ENCODE measurements at regions of chr2 and their contacts with region 1.

Region 1: DNA sequence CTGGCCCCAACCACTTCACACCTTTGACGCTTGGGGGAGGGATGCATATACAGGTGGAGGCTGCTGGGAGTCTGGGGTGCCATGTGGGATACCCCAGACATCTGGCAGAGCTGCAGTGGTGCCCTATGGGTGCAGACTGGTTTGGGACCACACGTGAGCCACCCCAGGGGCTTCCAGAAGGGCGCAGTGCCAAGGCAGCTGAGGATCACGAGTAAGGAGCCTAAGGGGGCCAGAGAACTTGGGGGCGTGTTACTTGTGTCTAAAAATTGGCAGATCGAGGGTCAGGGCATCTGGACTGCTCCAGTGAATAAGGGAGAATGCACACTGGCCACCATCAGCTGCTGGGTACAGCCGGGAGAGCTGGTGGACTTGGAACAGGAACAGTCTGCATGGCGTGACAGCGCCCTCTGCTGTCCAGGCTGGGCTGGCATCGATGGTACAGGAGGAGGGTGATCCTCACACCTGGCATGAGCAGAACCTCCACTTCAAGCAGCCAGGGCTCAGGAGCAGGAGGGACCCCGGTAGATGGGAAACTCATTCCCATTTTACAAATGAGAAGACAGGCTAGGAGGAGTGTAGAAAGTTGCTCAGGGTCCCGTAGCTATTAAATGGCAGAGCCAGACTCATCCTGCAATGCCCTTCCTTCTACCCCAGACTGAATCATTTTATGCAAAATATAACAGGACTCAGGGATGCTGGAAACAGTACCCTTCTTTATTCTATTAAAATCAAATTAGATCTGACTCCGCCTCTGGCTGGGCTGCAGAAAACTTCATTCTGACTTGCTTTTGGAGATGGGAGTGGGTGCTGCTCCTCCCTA is 60.4 kb downstream of the ATOH8 start:
- DNase-seq: peak; percentile 80 to 98 (median 91)
- ATAC-seq: peak; percentile 95
- H3K4me3 ChIP-seq: no peak overlapping the region
- H3K27ac ChIP-seq: no peak overlapping the region
- H3K4me1 ChIP-seq: peaks cover 10 to 22% of the 10 kb centered on the region in 2 donors
- H3K27me3 ChIP-seq: no peaks in the 10 kb centered on the region
- CTCF ChIP-seq: peak; percentile 90 to 95

Region 2: DNA sequence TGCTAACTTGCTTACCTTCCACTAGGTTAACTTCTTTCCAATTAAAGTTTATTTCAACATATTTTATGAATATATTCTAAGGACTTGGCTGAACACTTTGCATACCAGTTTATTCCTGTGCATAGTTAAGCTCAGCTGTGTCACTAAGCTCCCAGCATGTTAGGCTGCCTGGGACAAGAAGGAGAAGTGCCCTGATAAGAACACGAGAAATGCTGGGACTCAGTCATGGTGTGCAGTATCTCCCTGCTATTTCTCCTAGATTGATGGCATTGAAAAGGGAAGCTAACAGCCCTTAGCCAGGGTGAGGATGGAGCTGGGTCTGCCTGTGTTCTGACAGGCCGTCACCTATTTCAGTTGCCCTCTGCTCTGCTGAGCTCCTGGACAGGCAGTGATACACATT is 1097.6 kb before region 1 on chr2:
- intact Hi-C with region 1: no loop called
- DNase-seq: no peak
- ATAC-seq: peak; percentile 41
- H3K4me3 ChIP-seq: no peak overlapping the region
- H3K27ac ChIP-seq: no peak overlapping the region
- H3K4me1 ChIP-seq: no peaks in the 10 kb centered on the region
- H3K27me3 ChIP-seq: no peaks in the 10 kb centered on the region
- CTCF ChIP-seq: no peak

Region 3: DNA sequence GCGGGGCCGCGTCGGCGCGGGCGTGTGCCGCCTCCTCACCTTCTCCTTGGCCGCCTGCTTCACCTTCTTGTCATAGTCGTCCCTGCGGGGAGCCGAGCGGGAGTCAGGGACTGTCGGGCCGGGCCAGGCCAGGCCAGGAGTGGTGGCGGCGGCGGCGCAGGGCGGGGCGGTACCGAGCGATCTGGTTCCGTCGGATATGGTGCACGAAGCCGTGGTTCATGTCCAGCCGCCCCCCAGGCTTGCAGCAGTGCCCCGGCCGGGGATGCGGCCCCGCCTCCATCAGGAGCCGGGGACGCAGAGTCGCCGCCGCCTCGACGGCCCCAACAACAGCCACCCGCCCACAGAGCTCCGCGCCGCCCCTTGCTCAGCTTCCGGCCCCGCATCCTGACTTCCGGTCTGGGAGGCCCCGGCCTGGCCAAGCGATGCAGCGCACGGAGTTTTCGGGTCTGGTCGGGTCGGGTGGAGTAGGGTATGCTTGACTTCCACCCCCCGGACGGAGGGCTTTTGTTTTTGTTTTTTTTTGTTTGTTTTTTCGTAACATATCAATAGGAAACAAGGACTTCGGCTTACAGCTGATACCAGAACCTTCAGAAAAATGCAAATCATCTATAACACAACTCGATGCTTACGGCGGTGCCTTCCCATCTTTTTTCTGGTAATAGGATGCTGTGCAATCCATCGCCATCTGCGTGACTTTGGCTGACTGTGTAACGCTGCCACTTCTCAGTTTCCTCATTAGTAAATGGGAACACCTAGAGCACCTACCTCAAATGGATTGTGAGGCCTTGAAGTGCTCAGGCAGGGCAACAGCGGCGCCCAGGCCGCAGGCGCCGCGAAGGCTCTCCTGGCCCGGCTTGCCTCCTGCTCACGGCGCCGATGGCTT is 202.2 kb before region 1 on chr2 and contains the start of gene C2orf68:
- intact Hi-C with region 1: no loop called
- DNase-seq: peak; percentile 85 to 98 (median 92)
- ATAC-seq: peak; percentile 83
- H3K4me3 ChIP-seq: peak within 1 kb of the TSS; percentile 96 to 98
- H3K27ac ChIP-seq: peak within 1 kb of the TSS; percentile 78 to 91
- H3K4me1 ChIP-seq: peaks cover 17 to 56% of the 10 kb centered on the region in 2 donors
- H3K27me3 ChIP-seq: no peaks in the 10 kb centered on the region
- CTCF ChIP-seq: no peak
- polyA plus RNA-seq, gene C2orf68: 69.9 to 79.0 (median 74.5) TPM

Region 4: DNA sequence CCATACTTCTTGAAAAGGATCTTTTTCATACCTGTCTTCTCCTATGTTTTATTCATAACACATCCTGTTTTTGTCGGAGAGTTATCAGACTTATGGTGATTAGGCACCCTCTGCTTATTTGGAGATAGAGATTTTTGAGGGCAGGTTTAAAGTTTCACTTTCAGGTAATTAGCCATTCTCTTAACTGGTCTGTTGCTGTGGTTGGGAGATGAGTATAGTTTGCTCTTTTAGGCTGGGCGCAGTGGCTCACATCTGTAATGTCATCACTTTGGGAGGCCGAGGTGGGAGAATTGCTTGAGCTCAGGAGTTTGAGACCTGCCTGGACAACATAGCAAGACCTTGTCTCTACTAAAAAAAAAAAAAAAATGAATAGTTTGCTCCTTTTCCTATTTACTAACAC is 171.5 kb before region 1 on chr2:
- intact Hi-C with region 1: loop called in 1 of 2 experiments (anchors 5 kb)
- DNase-seq: no peak
- ATAC-seq: no peak
- H3K4me3 ChIP-seq: no peak overlapping the region
- H3K27ac ChIP-seq: no peak overlapping the region
- H3K4me1 ChIP-seq: peaks cover 0 to 3% of the 10 kb centered on the region in 2 donors
- H3K27me3 ChIP-seq: no peaks in the 10 kb centered on the region
- CTCF ChIP-seq: no peak

Region 5: GRCh38 chr2:85707304-85707703 is 106.9 kb before region 1 on chr2:
- intact Hi-C with region 1: no loop called
- DNase-seq: peak in 2 of 4 donors; percentile 76 to 88
- ATAC-seq: peak; percentile 57
- H3K4me3 ChIP-seq: no peak overlapping the region
- H3K27ac ChIP-seq: peak overlapping the region; percentile 94 to 95
- H3K4me1 ChIP-seq: peaks cover 79 to 99% of the 10 kb centered on the region in 2 donors
- H3K27me3 ChIP-seq: no peaks in the 10 kb centered on the region
- CTCF ChIP-seq: peak; percentile 87 to 92

Region 6: GRCh38 chr2:85728883-85729824 is 85.0 kb before region 1 on chr2:
- intact Hi-C with region 1: loop called in 1 of 2 experiments (anchors 5 kb)
- DNase-seq: peak; percentile 82 to 97 (median 90)
- ATAC-seq: peak; percentile 98
- H3K4me3 ChIP-seq: no peak overlapping the region
- H3K27ac ChIP-seq: peak overlapping the region; percentile 26 to 65
- H3K4me1 ChIP-seq: peaks cover 17 to 41% of the 10 kb centered on the region in 2 donors
- H3K27me3 ChIP-seq: no peaks in the 10 kb centered on the region
- CTCF ChIP-seq: peak; percentile 91 to 93

Region 7: DNA sequence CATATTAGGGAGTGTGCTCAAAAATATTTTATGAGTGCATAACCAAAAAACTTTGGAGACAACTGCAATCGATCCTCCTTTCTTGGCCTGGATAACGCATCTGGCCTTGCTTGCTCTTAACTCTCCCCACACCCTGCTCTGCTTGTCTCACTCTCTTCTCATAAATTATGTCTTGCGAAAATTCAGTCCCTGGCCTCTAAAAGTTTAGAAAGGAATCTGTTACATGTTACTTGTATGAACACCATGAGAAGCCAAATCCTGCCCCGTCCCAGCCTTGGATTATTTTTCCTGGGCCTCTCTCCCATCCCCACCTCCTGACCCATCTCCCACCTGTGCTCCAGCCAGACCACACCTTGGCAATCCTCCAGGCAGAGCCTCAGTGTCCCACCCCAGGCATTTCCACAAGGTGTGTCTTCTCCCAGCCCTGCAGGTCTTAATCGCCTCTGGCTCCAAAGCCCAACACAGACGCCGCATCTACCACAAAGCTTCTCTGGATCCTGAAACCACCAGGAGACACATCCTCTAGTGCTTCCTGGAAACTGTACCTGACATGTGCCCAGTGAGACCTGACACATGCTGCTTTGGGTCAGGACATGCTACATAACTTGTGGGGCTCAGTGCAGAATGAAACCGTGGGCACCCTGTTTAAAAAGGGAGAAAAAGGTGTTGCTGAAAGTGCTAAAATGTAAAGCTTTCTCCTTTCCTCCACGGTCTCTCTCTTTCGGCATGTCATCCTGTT is 174.2 kb after region 1 on chr2:
- intact Hi-C with region 1: no loop called
- DNase-seq: no peak
- ATAC-seq: peak; percentile 58
- H3K4me3 ChIP-seq: no peak overlapping the region
- H3K27ac ChIP-seq: no peak overlapping the region
- H3K4me1 ChIP-seq: peaks cover 0 to 9% of the 10 kb centered on the region in 2 donors
- H3K27me3 ChIP-seq: no peaks in the 10 kb centered on the region
- CTCF ChIP-seq: no peak